Heart right ventricle (tissue), 16 donors: ENCODE measurements at regions of chr3 and their contacts with region 1.

Region 1: DNA sequence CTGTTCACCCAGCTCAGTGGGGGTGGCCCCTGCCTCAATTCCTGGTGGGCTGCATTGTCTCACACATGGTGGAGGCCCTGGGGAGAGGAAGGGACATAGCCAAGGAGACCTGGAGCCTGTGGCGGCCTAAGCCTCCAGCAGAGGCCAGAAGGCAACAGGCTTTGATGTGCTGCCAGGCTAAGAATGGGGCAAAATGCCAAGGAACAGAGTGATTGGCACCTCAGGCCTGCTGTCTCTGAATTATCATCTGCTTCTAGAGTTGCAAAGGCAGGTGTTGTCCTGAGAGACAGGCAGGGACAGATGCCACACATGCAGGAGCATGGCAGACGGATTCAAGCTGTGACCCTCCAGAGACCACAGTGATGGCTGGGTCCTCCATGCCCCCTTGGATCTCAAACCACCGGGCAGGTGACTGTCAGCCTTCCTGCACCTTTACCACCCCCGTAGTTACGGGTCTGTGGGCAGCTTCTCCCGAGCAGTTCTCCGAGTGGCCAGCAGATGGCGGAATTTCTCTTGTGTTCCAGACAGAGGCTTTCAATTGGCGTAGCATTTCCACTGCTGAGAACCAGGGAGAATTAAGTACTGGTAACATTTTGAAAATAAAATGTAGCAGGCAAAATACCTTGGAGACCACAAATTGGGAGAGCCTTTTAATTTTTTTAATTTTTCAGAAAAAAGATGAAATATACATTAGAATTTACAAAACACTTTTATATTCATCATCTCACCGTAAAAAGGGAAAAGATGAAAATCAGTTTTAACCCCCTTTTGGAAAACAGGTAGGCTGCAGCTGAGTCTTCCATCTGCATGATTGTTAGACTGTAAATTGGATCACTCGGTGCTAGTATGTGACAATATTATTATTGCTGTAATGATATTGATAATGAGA is 525.5 kb upstream of the CFAP20DC start:
- DNase-seq: peak; percentile 81 to 84
- ATAC-seq: peak; percentile 73 to 87 (median 81)
- H3K4me3 ChIP-seq: no peak overlapping the region
- H3K27ac ChIP-seq: no peak overlapping the region
- H3K4me1 ChIP-seq: peaks cover 0 to 18% (median 0%) of the 10 kb centered on the region in 9 donors
- H3K27me3 ChIP-seq: no peaks in the 10 kb centered on the region
- CTCF ChIP-seq: peak; percentile 87 to 98 (median 96)

Region 2: DNA sequence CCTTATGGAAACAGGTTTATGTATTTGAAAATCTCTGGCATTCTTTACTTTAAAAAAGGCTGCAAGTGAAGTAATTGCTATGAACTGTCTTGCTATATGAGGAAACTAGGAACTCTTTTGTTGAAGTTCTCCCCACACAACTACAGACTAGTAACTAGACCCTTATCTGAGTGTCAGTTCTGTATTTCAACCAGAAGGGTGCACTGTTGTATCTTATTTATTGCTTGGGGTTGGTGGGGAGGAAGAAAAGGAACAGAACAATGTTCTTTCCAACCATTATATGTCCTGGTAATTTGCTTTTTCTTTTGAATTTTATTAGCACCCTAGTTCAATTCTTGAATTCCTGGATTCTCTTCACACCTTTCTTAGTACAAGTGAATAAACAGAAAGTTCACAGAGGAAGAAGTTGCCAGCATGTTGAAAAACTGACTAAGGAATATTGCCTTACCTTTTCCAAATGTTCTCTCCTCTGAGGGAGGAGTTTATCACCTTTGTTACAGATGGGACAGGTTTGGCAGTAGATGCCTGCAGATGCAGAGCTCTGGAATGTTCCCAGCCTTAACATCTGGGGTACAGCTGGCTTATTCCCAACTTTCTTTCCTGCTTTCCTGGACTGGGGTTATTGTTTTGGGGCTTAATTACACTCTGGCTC is 363.1 kb before region 1 on chr3:
- intact Hi-C with region 1: loop called in 4 of 10 experiments (anchors 5 to 10 kb)
- DNase-seq: no peak
- ATAC-seq: peak in 7 of 8 donors; percentile 52 to 76 (median 61)
- H3K4me3 ChIP-seq: no peak overlapping the region
- H3K27ac ChIP-seq: no peak overlapping the region
- H3K4me1 ChIP-seq: no peaks in the 10 kb centered on the region
- H3K27me3 ChIP-seq: peaks cover 0 to 4% (median 0%) of the 10 kb centered on the region in 7 donors
- CTCF ChIP-seq: peak; percentile 38 to 73 (median 64)

Region 3: DNA sequence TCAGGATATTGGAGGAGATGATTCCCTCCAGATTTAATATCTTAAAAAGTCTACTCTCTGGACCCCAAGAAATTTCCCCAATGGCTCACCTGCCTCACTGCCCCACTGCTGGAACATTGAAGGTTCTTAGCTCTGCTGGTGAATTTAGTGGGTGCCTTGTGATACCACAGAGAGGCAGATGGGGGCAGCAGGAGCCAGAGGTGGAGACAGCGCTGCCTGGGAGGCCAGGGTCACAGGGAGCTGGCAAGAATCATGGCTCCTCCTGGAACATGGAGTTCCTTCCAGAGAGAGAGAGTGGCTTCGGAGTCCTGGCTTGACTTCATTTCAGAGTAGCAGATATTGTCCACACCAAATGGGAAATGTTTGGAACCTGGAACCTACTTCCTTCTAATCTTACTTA is 262.0 kb before region 1 on chr3:
- intact Hi-C with region 1: loop called in 5 of 10 experiments (anchors 5 to 10 kb)
- DNase-seq: peak; percentile 35 to 61
- ATAC-seq: peak; percentile 47 to 97 (median 82)
- H3K4me3 ChIP-seq: no peak overlapping the region
- H3K27ac ChIP-seq: no peak overlapping the region
- H3K4me1 ChIP-seq: no peaks in the 10 kb centered on the region
- H3K27me3 ChIP-seq: no peaks in the 10 kb centered on the region
- CTCF ChIP-seq: peak; percentile 12 to 58 (median 51)

Region 4: GRCh38 chr3:59514865-59515482 is 60.4 kb before region 1 on chr3:
- intact Hi-C with region 1: no loop called
- DNase-seq: no peak
- ATAC-seq: no peak
- H3K4me3 ChIP-seq: no peak overlapping the region
- H3K27ac ChIP-seq: no peak overlapping the region
- H3K4me1 ChIP-seq: no peaks in the 10 kb centered on the region
- H3K27me3 ChIP-seq: no peaks in the 10 kb centered on the region
- CTCF ChIP-seq: no peak

Region 5: GRCh38 chr3:59535791-59536221 is 39.6 kb before region 1 on chr3:
- intact Hi-C with region 1: no loop called
- DNase-seq: no peak
- ATAC-seq: peak in 5 of 8 donors; percentile 33 to 82 (median 73)
- H3K4me3 ChIP-seq: no peak overlapping the region
- H3K27ac ChIP-seq: peak overlapping the region in 5 of 10 donors; percentile 46 to 73 (median 59)
- H3K4me1 ChIP-seq: peaks cover 0 to 25% (median 4%) of the 10 kb centered on the region in 9 donors
- H3K27me3 ChIP-seq: no peaks in the 10 kb centered on the region
- CTCF ChIP-seq: no peak